ENCODE measurements at regions of chr2 and their contacts with region 1.

Region 1: DNA sequence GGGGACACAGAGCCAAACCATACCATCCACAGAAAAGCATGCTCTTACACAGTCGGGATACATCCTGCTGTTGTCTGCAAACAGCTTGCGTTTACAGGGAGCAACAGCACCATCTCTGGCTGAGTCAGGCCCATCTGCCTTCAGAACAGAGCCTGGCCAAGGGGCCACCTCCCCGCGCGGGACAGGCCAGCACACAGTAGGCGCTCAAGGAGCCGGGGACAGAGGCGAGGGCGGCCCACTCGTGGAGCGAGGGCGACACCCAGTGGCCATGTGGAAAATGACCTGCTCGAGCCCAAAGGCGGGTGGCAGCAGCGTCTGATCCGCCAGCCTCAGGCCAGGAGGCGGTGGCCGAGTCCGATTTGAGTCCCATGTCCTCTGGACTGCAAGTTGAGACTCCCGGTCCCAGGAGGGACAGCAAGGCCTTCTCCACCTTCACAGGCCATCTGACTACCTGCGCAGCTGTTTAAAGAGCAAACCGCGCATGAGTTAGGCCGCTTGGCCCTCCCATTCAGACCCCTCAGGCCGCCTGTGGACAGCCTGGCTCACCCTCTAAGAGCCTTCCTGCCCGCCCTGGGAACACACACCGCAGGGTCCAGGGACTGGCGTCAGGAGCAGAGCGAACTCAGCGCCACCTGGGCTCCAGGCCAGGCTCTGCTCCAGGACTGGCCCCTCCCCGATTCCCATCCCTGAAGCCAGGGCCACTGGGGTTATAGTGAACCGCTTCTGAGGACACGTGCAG is 38.3 kb downstream of the TTC32 start:
- DNase-seq: peak; percentile 84
- ATAC-seq: peak; percentile 85

Region 2: DNA sequence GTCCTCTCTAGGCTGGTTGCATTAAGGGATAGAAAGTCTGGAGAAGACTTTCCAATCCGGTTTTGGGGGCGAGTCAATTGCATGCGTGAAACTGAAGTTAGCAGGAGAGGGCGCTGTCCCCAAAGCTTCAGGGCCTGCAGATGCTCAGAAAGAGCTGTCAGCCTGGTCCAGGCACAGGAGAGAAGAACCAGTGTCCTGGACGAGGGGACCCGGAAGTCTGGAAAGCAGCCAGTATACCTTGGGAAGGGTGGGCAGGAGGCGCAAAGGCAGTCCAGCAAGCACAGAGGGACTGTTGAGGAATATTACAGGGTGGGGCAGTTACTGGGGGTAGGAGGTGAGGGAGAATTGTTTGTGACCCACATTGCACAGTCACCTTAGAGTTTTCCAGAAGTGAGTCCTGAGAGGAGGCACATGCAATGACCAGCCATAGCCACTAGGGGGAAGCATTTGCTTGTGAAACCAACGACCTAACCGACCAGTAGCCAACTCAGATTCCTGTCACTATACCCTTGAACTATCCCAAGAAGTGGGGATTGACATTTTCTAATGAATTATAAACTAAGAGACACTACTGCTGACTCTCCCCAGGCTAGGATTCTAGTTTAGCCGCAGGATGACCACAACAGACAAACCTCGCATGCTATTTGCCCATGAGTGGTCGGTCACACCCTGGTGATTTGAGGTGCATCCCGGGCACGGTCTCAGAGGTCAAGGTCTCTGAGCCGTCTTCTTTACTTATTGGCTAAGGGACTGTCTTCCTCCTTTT is 1475.8 kb before region 1 on chr2:
- intact Hi-C with region 1: loop called (anchors 10 kb)
- DNase-seq: peak; percentile 89
- ATAC-seq: peak; percentile 89

Region 3: GRCh38 chr2:18749912-18750526 is 1113.5 kb before region 1 on chr2:
- intact Hi-C with region 1: loop called (anchors 10 kb)
- DNase-seq: peak; percentile 70
- ATAC-seq: no peak

Region 4: GRCh38 chr2:19574778-19575260 is 288.7 kb before region 1 on chr2:
- intact Hi-C with region 1: no loop called
- DNase-seq: peak; percentile 72
- ATAC-seq: peak; percentile 87

Measured in sciatic nerve (tissue), 2 donors.